Mammary epithelial cell (primary cell): ENCODE measurements at regions of chr16 and their contacts with region 1.

Region 1: GRCh38 chr16:67872786-67873537 is at the start of gene EDC4:
- DNase-seq: peak; percentile 74
- H3K4me3 ChIP-seq: peak within 1 kb of the TSS; percentile 55 to 86 (median 67)
- H3K27ac ChIP-seq: peak within 1 kb of the TSS; percentile 51
- H3K4me1 ChIP-seq: peaks cover 21% of the 10 kb centered on the region
- H3K27me3 ChIP-seq: no peaks in the 10 kb centered on the region
- CTCF ChIP-seq: no peak
- total RNA-seq, gene EDC4: 31.5 to 53.9 TPM

Region 2: GRCh38 chr16:67833418-67834241 is 39.3 kb before region 1 on chr16:
- CTCF ChIA-PET with region 1: no interaction called
- dilution Hi-C with region 1: no loop called
- in situ Hi-C with region 1: no loop called
- intact Hi-C with region 1: loop called (anchors 5 kb)
- DNase-seq: peak; percentile 78
- H3K4me3 ChIP-seq: peak overlapping the region; percentile 52 to 94 (median 70)
- H3K27ac ChIP-seq: peak overlapping the region; percentile 67
- H3K4me1 ChIP-seq: peaks cover 8% of the 10 kb centered on the region
- H3K27me3 ChIP-seq: no peaks in the 10 kb centered on the region
- CTCF ChIP-seq: no peak